CD14-positive monocyte (primary cell): ENCODE measurements at regions of chr16 and their contacts with region 1.

Region 1: DNA sequence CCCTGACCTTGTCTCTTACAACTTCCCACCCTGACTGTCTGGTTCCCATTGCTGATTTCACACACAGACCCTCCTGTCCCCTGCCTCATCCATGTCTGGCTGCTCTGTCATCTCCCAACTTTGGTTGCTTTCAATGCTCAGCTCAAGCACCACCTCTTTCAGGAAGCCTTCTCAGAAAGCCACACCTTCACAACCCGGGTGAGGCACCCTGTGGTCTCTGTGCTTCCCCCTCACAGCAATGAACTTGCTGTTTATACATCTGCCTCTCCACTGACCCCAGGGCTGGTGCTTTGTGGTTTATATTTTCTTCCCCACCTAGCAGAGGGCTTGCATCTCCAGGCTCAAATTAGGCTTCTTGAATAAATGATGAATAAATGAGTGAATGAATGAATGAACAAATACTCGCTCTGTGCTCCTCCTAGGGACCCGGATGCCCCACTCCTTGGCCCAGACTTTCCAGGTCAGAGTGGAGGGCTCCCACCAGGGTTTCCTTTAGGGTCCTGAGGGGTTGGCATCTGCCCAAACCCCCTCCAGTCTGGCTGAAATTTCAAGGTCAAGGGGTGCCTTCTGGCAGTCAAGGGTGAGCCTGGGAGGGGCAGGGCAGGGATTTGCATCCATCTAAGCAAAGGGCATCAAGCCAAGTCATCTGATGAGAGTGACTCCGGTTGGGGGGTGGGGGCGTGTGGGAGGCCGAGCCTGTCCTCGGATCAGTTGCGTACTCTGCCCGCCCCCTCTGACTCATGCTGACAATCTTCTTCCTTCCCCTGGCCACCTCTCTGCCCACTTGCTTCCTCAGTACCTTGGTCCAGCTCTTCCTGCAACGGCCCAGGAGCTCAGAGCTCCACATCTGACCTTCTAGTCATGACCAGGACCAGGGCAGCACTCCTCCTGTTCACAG is at the start of gene ITGAX:
- DNase-seq: peak; percentile 97 to 98 (median 97)
- H3K4me3 ChIP-seq: peak within 1 kb of the TSS; percentile 67 to 93 (median 75)
- H3K4me3 Mint-ChIP-seq: peak within 1 kb of the TSS; percentile 97 to 100
- H3K27ac ChIP-seq: peak within 1 kb of the TSS; percentile 99
- H3K27ac Mint-ChIP-seq: peak within 1 kb of the TSS; percentile 99 to 100 (median 100)
- H3K4me1 ChIP-seq: peaks cover 95 to 100% of the 10 kb centered on the region in 2 donors
- H3K4me1 Mint-ChIP-seq: peaks cover 82% of the 10 kb centered on the region
- H3K27me3 ChIP-seq: no peaks in the 10 kb centered on the region
- H3K27me3 Mint-ChIP-seq: peaks cover 0 to 10% (median 3%) of the 10 kb centered on the region in 3 donors
- CTCF ChIP-seq: no peak
- polyA plus RNA-seq, gene ITGAX: 40.7 to 710 (median 71.3) TPM

Region 2: DNA sequence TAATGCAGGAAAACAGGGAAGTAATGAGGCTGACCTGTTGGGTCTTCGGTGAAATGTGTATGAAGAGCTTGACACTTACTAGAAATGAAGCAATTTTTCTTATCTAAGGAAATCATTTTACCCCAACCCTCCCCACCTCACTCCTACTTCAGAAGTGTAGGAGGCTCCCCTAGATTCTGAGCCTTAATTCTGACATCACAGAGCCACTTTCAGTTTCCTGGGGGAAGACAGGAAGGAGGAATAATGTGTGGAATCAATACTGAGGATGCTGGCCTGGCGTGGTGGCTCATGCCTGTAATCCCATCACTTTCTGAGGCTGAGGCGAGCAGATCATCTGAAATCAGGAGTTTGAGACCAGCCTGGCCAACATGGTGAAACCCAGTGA is 676.1 kb before region 1 on chr16:
- intact Hi-C with region 1: no loop called
- DNase-seq: no peak
- H3K4me3 ChIP-seq: no peak overlapping the region
- H3K4me3 Mint-ChIP-seq: no peak overlapping the region
- H3K27ac ChIP-seq: no peak overlapping the region
- H3K27ac Mint-ChIP-seq: no peak overlapping the region
- H3K4me1 ChIP-seq: no peaks in the 10 kb centered on the region
- H3K4me1 Mint-ChIP-seq: peaks cover 2% of the 10 kb centered on the region
- H3K27me3 ChIP-seq: no peaks in the 10 kb centered on the region
- H3K27me3 Mint-ChIP-seq: peaks cover 0 to 9% (median 8%) of the 10 kb centered on the region in 3 donors
- CTCF ChIP-seq: no peak

Region 3: DNA sequence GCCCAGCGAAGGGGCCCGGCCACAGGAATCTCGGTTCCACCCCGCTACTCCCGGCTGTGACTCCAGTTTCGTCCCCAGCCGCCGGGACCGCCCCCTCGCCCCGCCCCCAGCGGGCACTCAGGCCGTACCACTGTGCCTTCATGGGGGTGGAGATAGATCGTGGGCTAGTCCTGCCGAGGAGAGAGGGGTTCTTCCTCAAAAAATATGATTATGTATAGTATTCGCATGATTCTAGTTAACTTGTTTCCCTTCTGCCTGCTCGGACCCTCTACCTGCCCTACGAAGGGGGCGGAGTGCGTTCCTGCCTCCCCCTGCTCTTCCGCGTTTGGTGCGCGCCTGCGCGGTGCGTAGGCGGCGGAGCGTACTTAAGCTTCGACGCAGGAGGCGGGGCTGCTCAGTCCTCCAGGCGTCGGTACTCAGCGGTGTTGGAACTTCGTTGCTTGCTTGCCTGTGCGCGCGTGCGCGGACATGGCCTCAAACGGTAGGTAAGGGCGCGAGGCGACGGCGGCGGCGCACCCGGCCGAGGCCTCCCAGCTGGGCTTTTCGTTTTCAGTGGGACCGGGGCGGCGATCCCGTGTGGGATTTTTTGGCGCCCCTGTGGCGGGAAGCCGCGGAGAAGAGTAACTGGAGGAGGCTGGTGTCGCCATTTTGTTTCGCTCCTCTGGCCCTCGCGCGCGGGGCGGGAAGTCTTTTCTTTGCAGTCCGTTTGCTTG is 174.7 kb before region 1 on chr16 and contains the start of gene FUS:
- intact Hi-C with region 1: loop called in 1 of 2 experiments (anchors 5 kb)
- DNase-seq: peak; percentile 91 to 96 (median 94)
- H3K4me3 ChIP-seq: peak within 1 kb of the TSS; percentile 71 to 98 (median 95)
- H3K4me3 Mint-ChIP-seq: peak within 1 kb of the TSS; percentile 93 to 94
- H3K27ac ChIP-seq: peak within 1 kb of the TSS; percentile 88 to 95
- H3K27ac Mint-ChIP-seq: peak within 1 kb of the TSS; percentile 97 to 100 (median 99)
- H3K4me1 ChIP-seq: peaks cover 36 to 46% of the 10 kb centered on the region in 2 donors
- H3K4me1 Mint-ChIP-seq: peaks cover 49% of the 10 kb centered on the region
- H3K27me3 ChIP-seq: no peaks in the 10 kb centered on the region
- H3K27me3 Mint-ChIP-seq: peaks cover 2 to 6% (median 4%) of the 10 kb centered on the region in 3 donors
- CTCF ChIP-seq: no peak
- polyA plus RNA-seq, gene FUS: 54.9 to 246 (median 78.5) TPM

Region 4: GRCh38 chr16:31301708-31302400 is 52.8 kb before region 1 on chr16:
- intact Hi-C with region 1: loop called in 1 of 2 experiments (anchors 5 kb)
- DNase-seq: peak; percentile 76 to 90 (median 83)
- H3K4me3 ChIP-seq: peak overlapping the region in 1 of 3 experiments; percentile 24
- H3K4me3 Mint-ChIP-seq: peak overlapping the region in 1 of 2 donors; percentile 62
- H3K27ac ChIP-seq: peak overlapping the region; percentile 62 to 80
- H3K27ac Mint-ChIP-seq: peak overlapping the region; percentile 86 to 95 (median 91)
- H3K4me1 ChIP-seq: peaks cover 15 to 36% of the 10 kb centered on the region in 2 donors
- H3K4me1 Mint-ChIP-seq: peaks cover 40% of the 10 kb centered on the region
- H3K27me3 ChIP-seq: no peaks in the 10 kb centered on the region
- H3K27me3 Mint-ChIP-seq: peaks cover 0 to 2% (median 0%) of the 10 kb centered on the region in 3 donors
- CTCF ChIP-seq: no peak

Region 5: GRCh38 chr16:31365131-31365865 is 10.7 kb after region 1 on chr16:
- intact Hi-C with region 1: loop called in 1 of 2 experiments (anchors 2 kb)
- DNase-seq: no peak
- H3K4me3 ChIP-seq: no peak overlapping the region
- H3K4me3 Mint-ChIP-seq: peak overlapping the region; percentile 0 to 17
- H3K27ac ChIP-seq: peak overlapping the region in 1 of 2 donors; percentile 29
- H3K27ac Mint-ChIP-seq: peak overlapping the region; percentile 50 to 93 (median 81)
- H3K4me1 ChIP-seq: peaks cover 53 to 64% of the 10 kb centered on the region in 2 donors
- H3K4me1 Mint-ChIP-seq: peaks cover 65% of the 10 kb centered on the region
- H3K27me3 ChIP-seq: no peaks in the 10 kb centered on the region
- H3K27me3 Mint-ChIP-seq: peaks cover 0 to 4% (median 0%) of the 10 kb centered on the region in 3 donors
- CTCF ChIP-seq: no peak

Region 6: GRCh38 chr16:31377210-31377903 is 22.7 kb after region 1 on chr16:
- intact Hi-C with region 1: no loop called
- DNase-seq: no peak
- H3K4me3 ChIP-seq: no peak overlapping the region
- H3K4me3 Mint-ChIP-seq: no peak overlapping the region
- H3K27ac ChIP-seq: no peak overlapping the region
- H3K27ac Mint-ChIP-seq: peak overlapping the region in 1 of 7 donors; percentile 54
- H3K4me1 ChIP-seq: peaks cover 0 to 2% of the 10 kb centered on the region in 2 donors
- H3K4me1 Mint-ChIP-seq: peaks cover 2% of the 10 kb centered on the region
- H3K27me3 ChIP-seq: no peaks in the 10 kb centered on the region
- H3K27me3 Mint-ChIP-seq: peaks cover 0 to 2% (median 0%) of the 10 kb centered on the region in 3 donors
- CTCF ChIP-seq: no peak

Region 7: GRCh38 chr16:31458844-31459721 is 104.4 kb after region 1 on chr16 and contains the start of gene ARMC5:
- intact Hi-C with region 1: loop called in 1 of 2 experiments (anchors 5 kb)
- DNase-seq: peak; percentile 99
- H3K4me3 ChIP-seq: peak within 1 kb of the TSS; percentile 54 to 86 (median 86)
- H3K4me3 Mint-ChIP-seq: peak within 1 kb of the TSS; percentile 86 to 92
- H3K27ac ChIP-seq: peak within 1 kb of the TSS; percentile 95 to 96
- H3K27ac Mint-ChIP-seq: peak within 1 kb of the TSS; percentile 94 to 97 (median 95)
- H3K4me1 ChIP-seq: peaks cover 56 to 60% of the 10 kb centered on the region in 2 donors
- H3K4me1 Mint-ChIP-seq: peaks cover 53% of the 10 kb centered on the region
- H3K27me3 ChIP-seq: no peaks in the 10 kb centered on the region
- H3K27me3 Mint-ChIP-seq: peaks cover 0 to 6% (median 0%) of the 10 kb centered on the region in 3 donors
- CTCF ChIP-seq: peak; percentile 68
- polyA plus RNA-seq, gene ARMC5: 2.9 to 9.3 (median 4.2) TPM

Region 8: DNA sequence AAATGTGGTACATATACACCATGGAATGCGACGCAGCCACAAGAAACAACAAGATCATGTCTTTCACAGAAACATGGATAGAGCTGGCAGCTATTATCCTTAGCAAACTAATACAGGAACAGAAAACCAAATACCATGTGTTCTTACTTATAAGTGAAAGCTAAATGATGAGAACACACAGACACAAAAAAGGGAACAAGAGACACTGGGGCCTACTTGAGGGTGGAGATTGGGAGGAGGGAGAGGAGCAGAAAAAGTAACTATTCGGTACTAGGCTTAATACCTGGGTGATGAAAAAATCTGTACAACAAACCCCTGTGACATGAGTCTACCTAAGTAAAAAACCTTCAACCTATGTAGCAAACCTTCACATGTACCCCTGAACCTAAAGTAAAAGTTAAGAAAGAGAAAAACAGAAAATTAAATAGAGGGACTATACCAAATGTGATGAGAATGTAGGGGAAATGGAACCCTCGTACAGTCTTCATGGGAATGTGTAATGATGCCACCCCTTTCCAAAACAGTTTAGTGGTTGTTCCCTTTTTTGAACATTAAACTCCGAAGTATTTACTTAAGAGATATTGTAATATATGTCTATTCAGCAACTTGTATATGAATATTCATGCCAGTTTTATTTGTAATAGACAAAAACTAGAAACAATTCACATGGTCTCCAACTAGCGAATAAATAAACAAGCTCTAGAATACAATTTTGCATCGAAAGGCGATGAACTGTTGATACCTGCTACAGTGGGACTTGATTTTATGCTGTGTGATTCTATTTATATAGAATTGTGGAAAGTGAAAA is 207.0 kb after region 1 on chr16:
- intact Hi-C with region 1: no loop called
- DNase-seq: no peak
- H3K4me3 ChIP-seq: no peak overlapping the region
- H3K4me3 Mint-ChIP-seq: no peak overlapping the region
- H3K27ac ChIP-seq: no peak overlapping the region
- H3K27ac Mint-ChIP-seq: no peak overlapping the region
- H3K4me1 ChIP-seq: no peaks in the 10 kb centered on the region
- H3K4me1 Mint-ChIP-seq: no peaks in the 10 kb centered on the region
- H3K27me3 ChIP-seq: peaks cover 0 to 2% of the 10 kb centered on the region in 2 donors
- H3K27me3 Mint-ChIP-seq: peaks cover 0 to 13% (median 1%) of the 10 kb centered on the region in 3 donors
- CTCF ChIP-seq: no peak

Region 9: GRCh38 chr16:31873556-31874365 is 519.1 kb after region 1 on chr16 and contains the start of gene ZNF267:
- intact Hi-C with region 1: loop called (anchors 2 to 5 kb)
- DNase-seq: peak; percentile 95 to 97 (median 96)
- H3K4me3 ChIP-seq: peak within 1 kb of the TSS; percentile 82 to 94 (median 85)
- H3K4me3 Mint-ChIP-seq: peak within 1 kb of the TSS; percentile 90 to 95
- H3K27ac ChIP-seq: peak within 1 kb of the TSS; percentile 96 to 100
- H3K27ac Mint-ChIP-seq: peak within 1 kb of the TSS; percentile 98 to 100 (median 99)
- H3K4me1 ChIP-seq: peaks cover 65 to 83% of the 10 kb centered on the region in 2 donors
- H3K4me1 Mint-ChIP-seq: peaks cover 78% of the 10 kb centered on the region
- H3K27me3 ChIP-seq: no peaks in the 10 kb centered on the region
- H3K27me3 Mint-ChIP-seq: no peaks in the 10 kb centered on the region
- CTCF ChIP-seq: no peak
- polyA plus RNA-seq, gene ZNF267: 13.5 to 23.8 (median 18.0) TPM